MCF 10A (cell line): ENCODE measurements at regions of chr4 and their contacts with region 1.

Region 1: GRCh38 chr4:184649026-184649970 is at the starts of genes CASP3 and PRIMPOL:
- DNase-seq: peak; percentile 94
- H3K4me3 Mint-ChIP-seq: peak within 1 kb of the TSS; percentile 81
- H3K27ac Mint-ChIP-seq: peak within 1 kb of the TSS; percentile 78
- H3K4me1 Mint-ChIP-seq: peaks cover 37% of the 10 kb centered on the region
- H3K27me3 Mint-ChIP-seq: no peaks in the 10 kb centered on the region
- CTCF ChIP-seq: no peak
- total RNA-seq, gene CASP3: 27.4 and 28.6 TPM in 2 replicates
- total RNA-seq, gene PRIMPOL: 19.2 and 20.7 TPM in 2 replicates

Region 2: GRCh38 chr4:182944484-182945213 is 1704.6 kb before region 1 on chr4:
- CTCF ChIA-PET with region 1: no interaction called
- POLR2A ChIA-PET with region 1: no interaction called
- intact Hi-C with region 1: no loop called
- DNase-seq: no peak
- H3K4me3 Mint-ChIP-seq: no peak overlapping the region
- H3K27ac Mint-ChIP-seq: no peak overlapping the region
- H3K4me1 Mint-ChIP-seq: no peaks in the 10 kb centered on the region
- H3K27me3 Mint-ChIP-seq: peaks cover 41% of the 10 kb centered on the region
- CTCF ChIP-seq: no peak

Region 3: GRCh38 chr4:183576701-183577404 is 1072.4 kb before region 1 on chr4:
- CTCF ChIA-PET with region 1: no interaction called
- POLR2A ChIA-PET with region 1: no interaction called
- intact Hi-C with region 1: no loop called
- DNase-seq: no peak
- H3K4me3 Mint-ChIP-seq: no peak overlapping the region
- H3K27ac Mint-ChIP-seq: no peak overlapping the region
- H3K4me1 Mint-ChIP-seq: no peaks in the 10 kb centered on the region
- H3K27me3 Mint-ChIP-seq: no peaks in the 10 kb centered on the region
- CTCF ChIP-seq: no peak

Region 4: GRCh38 chr4:184583738-184584502 is 65.4 kb before region 1 on chr4:
- CTCF ChIA-PET with region 1: no interaction called
- POLR2A ChIA-PET with region 1: no interaction called
- intact Hi-C with region 1: no loop called
- DNase-seq: no peak
- H3K4me3 Mint-ChIP-seq: no peak overlapping the region
- H3K27ac Mint-ChIP-seq: no peak overlapping the region
- H3K4me1 Mint-ChIP-seq: no peaks in the 10 kb centered on the region
- H3K27me3 Mint-ChIP-seq: no peaks in the 10 kb centered on the region
- CTCF ChIP-seq: no peak

Region 5: DNA sequence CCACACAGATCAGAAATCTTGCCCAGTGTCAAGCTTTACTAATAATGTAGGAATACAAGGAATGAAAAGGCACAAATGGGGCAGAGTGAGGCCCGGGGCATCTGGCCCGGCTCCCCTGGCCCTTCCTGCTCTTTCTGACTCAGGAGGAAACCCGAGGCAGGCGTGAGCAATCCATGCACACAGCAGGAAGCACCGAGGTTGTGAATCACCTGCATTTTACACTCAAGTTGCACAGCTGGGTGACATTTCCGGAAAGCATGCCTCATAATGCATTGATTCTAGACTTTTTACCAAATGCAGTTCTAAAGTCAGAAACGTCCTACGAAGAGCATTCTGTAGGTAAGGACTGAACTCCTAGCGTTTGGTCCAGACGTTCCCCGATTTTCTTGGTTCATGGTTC is 39.1 kb after region 1 on chr4:
- CTCF ChIA-PET with region 1: interaction called, 3 read pairs
- POLR2A ChIA-PET with region 1: interaction called, 15 read pairs
- intact Hi-C with region 1: loop called (anchors 2 kb)
- DNase-seq: peak; percentile 93
- H3K4me3 Mint-ChIP-seq: peak overlapping the region; percentile 43
- H3K27ac Mint-ChIP-seq: peak overlapping the region; percentile 83
- H3K4me1 Mint-ChIP-seq: peaks cover 24% of the 10 kb centered on the region
- H3K27me3 Mint-ChIP-seq: no peaks in the 10 kb centered on the region
- CTCF ChIP-seq: no peak

Region 6: GRCh38 chr4:184695178-184695896 is 46.0 kb after region 1 on chr4:
- CTCF ChIA-PET with region 1: no interaction called
- POLR2A ChIA-PET with region 1: interaction called, 14 read pairs
- intact Hi-C with region 1: no loop called
- DNase-seq: peak; percentile 26
- H3K4me3 Mint-ChIP-seq: no peak overlapping the region
- H3K27ac Mint-ChIP-seq: peak overlapping the region; percentile 61
- H3K4me1 Mint-ChIP-seq: peaks cover 10% of the 10 kb centered on the region
- H3K27me3 Mint-ChIP-seq: no peaks in the 10 kb centered on the region
- CTCF ChIP-seq: no peak

Region 7: GRCh38 chr4:184755278-184755677 is 106.0 kb after region 1 on chr4:
- CTCF ChIA-PET with region 1: interaction called, 5 read pairs
- POLR2A ChIA-PET with region 1: interaction called, 4 read pairs
- intact Hi-C with region 1: loop called (anchors 1 kb)
- DNase-seq: peak; percentile 87
- H3K4me3 Mint-ChIP-seq: peak overlapping the region; percentile 48
- H3K27ac Mint-ChIP-seq: peak overlapping the region; percentile 76
- H3K4me1 Mint-ChIP-seq: peaks cover 37% of the 10 kb centered on the region
- H3K27me3 Mint-ChIP-seq: no peaks in the 10 kb centered on the region
- CTCF ChIP-seq: no peak

Region 8: DNA sequence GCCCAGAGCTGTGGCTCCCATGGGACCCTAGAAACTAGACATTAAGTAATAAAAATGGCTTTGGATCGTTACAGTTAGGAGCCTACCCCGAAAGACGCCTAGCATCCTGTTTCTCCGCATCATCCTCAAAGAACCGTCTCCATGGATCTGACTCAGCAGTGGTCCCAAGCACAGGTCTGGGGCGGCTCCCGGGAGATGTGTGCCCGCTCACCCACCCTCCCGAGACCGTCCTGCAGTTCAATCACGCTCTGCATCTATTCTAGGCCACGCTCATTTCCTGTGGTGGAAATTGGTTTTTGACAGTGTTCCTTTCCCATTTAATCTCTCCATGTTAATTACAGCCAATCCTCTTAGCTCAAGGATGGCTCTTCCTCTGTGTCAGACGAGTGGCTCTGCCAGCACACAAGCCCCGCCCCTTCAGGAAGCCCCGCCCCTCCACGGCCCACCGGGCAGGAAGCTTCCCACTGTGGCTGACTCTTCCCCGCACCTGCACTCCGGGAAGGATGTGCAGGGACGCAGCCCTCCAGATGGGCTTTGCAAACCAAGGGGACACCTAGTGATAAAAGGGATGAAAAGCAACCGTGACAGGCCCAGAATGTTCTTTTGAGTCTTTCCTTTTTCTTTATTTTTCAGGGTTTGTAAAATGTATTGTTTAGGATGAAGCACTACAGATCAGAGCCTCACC is 334.5 kb after region 1 on chr4:
- CTCF ChIA-PET with region 1: no interaction called
- POLR2A ChIA-PET with region 1: no interaction called
- intact Hi-C with region 1: loop called (anchors 10 kb)
- DNase-seq: peak; percentile 70
- H3K4me3 Mint-ChIP-seq: no peak overlapping the region
- H3K27ac Mint-ChIP-seq: no peak overlapping the region
- H3K4me1 Mint-ChIP-seq: peaks cover 3% of the 10 kb centered on the region
- H3K27me3 Mint-ChIP-seq: no peaks in the 10 kb centered on the region
- CTCF ChIP-seq: peak; percentile 47